Left cardiac atrium (tissue), 4 donors: ENCODE measurements at regions of chr2 and their contacts with region 1.

Region 1: GRCh38 chr2:53424902-53425301 is 342.7 kb upstream of the CHAC2 start:
- DNase-seq: no peak
- ATAC-seq: no peak

Region 2: GRCh38 chr2:53252115-53252514 is 172.8 kb before region 1 on chr2:
- intact Hi-C with region 1: loop called in 1 of 2 experiments (anchors 5 kb)
- DNase-seq: no peak
- ATAC-seq: peak in 1 of 2 donors; percentile 37